ENCODE measurements at regions of chr1 and their contacts with region 1.

Region 1: DNA sequence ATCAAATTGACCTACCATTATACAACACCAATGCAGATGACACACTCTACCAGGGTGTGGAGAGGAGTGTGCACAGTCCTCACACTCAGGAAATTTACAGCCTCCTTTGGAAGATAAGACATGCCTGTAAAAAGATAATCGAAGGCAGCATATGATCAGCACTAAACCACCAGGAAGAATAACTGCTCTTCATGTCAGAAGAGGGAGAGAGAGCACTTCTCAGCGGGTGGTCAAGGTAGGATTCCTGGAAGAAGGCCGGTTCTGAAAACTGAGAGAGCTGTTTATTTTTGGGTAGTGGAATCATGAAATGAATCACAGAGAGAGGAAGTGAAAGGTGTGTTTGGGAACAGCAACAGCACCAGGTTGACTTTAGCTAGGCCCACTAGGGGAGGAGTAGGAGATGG is 14.0 kb upstream of the ZNF697 start:
- DNase-seq: no peak
- ATAC-seq: no peak
- H3K4me3 ChIP-seq: no peak overlapping the region
- H3K27ac ChIP-seq: no peak overlapping the region
- H3K4me1 ChIP-seq: peaks cover 0 to 12% (median 5%) of the 10 kb centered on the region in 4 donors
- H3K27me3 ChIP-seq: no peaks in the 10 kb centered on the region
- CTCF ChIP-seq: no peak
- POLR2A ChIP-seq: no peak

Region 2: DNA sequence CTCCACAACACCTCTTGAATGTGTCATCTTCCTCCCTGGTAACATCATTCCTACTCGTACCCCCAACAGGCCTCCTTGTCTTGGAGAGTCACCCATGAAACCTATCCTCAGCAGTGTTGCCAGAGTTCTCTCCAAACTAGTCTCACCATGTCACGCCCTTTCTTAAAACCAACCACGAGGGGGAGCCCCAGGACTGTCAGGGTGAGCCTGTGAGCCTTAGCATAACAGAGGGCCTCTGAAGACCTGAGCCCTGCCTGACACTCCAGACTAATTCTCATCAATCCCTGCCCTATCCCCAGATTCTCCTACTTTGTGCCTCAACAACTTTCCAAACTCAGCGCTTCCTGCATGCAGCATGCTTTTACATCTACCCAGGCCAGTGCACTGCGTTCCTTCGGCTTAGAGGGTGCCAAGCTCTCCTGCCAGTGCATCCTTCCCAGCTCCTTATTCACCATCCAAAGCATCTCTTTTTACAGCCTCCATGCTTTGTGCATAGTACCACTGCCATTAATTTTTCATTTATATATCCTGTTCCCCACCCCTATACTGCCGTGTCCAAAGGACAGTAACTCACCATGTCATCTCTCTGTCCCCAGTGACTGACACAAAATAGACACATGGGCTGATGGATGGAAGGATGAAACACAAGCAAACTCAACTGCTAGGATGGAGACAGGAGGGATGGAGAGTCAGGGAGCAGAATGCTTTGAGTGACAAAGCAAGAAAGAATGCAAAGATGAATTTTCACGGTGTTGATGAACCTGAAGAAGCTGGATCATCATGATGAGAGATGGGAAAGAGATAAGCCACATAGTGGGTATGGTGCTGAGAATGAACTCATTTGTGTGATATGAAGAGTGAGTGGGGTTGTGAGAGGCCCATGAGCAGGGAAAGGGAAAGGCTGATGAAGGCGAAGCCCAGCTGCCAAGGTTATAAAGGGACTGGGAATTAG is 48.0 kb before region 1 on chr1:
- intact Hi-C with region 1: loop called (anchors 5 kb)
- DNase-seq: peak; percentile 77 to 88 (median 79)
- ATAC-seq: peak; percentile 94 to 96 (median 96)
- H3K4me3 ChIP-seq: no peak overlapping the region
- H3K27ac ChIP-seq: no peak overlapping the region
- H3K4me1 ChIP-seq: no peaks in the 10 kb centered on the region
- H3K27me3 ChIP-seq: no peaks in the 10 kb centered on the region
- CTCF ChIP-seq: peak; percentile 71 to 90 (median 79)
- POLR2A ChIP-seq: no peak